ENCODE measurements at regions of chr19 and their contacts with region 1.

Region 1: GRCh38 chr19:892243-893050 is 540 bp downstream of the MED16 start:
- DNase-seq: no peak
- ATAC-seq: peak; percentile 40
- H3K4me3 Mint-ChIP-seq: peak overlapping the region; percentile 89
- H3K27ac Mint-ChIP-seq: peak overlapping the region; percentile 99
- H3K4me1 Mint-ChIP-seq: peaks cover 15% of the 10 kb centered on the region
- H3K27me3 Mint-ChIP-seq: no peaks in the 10 kb centered on the region

Region 2: GRCh38 chr19:872266-872951 is 20.0 kb before region 1 on chr19:
- POLR2A ChIA-PET with region 1: interaction called, 11 read pairs
- DNase-seq: peak; percentile 84
- ATAC-seq: peak; percentile 85
- H3K4me3 Mint-ChIP-seq: peak overlapping the region; percentile 81
- H3K27ac Mint-ChIP-seq: peak overlapping the region; percentile 87
- H3K4me1 Mint-ChIP-seq: peaks cover 7% of the 10 kb centered on the region
- H3K27me3 Mint-ChIP-seq: no peaks in the 10 kb centered on the region

Region 3: DNA sequence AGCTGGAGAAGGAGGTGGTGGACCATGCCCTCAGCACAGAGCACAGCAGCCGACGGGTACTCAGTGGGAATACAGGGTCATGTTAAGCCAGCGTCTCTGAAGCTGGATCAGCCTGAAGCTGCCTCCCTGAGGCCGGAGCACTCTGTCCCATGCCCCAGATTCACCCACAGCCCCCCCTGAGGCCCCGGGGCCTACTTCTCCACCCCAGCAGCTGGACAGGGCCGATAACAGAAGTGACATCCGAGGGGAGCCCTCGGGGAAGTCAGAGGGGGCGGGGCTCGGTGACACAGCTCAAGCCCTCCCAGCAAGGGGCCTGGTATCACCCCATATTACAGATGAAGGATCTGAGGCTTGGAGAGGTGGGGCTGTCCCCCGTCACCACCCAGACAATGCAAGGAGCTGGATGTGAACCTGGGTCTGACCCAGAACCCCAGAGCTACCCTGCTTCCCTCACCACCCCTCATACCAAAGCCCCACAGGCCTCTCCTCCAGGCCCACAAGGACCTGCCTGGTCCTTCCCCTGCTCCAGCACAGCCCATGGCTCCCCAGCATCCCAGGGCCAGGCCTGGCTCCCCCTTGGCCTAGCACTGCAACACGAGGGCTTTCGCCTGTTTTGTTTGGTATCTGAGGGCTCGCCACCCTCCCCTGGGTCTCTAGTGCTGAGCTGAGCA is 14.9 kb after region 1 on chr19:
- POLR2A ChIA-PET with region 1: interaction called, 57 read pairs
- DNase-seq: no peak
- ATAC-seq: no peak
- H3K4me3 Mint-ChIP-seq: peak overlapping the region; percentile 80
- H3K27ac Mint-ChIP-seq: peak overlapping the region; percentile 79
- H3K4me1 Mint-ChIP-seq: peaks cover 36% of the 10 kb centered on the region
- H3K27me3 Mint-ChIP-seq: no peaks in the 10 kb centered on the region